PC-3 (cell line): ENCODE measurements at regions of chr17 and their contacts with region 1.

Region 1: DNA sequence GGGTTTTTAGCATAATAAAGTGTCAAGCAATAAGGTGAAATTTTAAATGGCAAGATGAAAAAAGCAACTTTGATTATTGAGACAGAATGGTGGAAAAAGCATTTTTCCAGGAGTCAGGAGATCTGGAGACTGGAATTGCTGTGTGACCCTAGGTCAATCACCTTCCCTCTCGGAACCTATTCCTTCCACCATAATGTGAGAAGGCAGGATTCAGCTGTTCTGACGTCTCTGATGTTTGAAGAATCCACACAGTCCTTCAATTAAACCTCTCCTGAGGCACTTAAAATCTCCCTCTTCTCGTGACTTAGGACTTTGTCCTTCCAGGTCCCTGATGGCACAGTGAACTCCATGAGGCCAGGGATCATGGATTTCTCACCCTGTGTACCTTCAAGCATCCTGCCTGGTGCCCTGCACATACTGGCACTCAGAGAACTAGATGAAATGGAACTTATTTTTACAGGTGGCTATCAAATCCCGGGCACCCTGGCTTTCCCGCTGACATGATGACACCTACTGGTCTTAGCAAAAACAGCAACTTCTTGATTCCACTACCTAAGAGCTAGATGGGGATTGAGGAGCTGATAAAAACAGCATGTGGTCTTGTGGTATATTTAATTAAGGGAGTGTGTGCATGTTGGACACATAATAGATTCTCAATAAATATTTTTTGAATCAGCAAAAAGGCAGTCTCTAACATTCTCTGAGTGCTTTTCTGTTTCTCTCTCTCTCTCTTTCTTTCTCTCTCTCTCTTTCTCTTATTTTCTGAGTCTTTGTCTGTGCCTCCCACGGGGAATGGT is 2.3 kb upstream of the CCDC182 start:
- DNase-seq: peak; percentile 83
- ATAC-seq: peak; percentile 95
- H3K4me3 ChIP-seq: no peak overlapping the region
- H3K27ac ChIP-seq: no peak overlapping the region
- H3K4me1 ChIP-seq: no peaks in the 10 kb centered on the region
- H3K27me3 ChIP-seq: peaks cover 40% of the 10 kb centered on the region
- CTCF ChIP-seq: peak; percentile 96

Region 2: DNA sequence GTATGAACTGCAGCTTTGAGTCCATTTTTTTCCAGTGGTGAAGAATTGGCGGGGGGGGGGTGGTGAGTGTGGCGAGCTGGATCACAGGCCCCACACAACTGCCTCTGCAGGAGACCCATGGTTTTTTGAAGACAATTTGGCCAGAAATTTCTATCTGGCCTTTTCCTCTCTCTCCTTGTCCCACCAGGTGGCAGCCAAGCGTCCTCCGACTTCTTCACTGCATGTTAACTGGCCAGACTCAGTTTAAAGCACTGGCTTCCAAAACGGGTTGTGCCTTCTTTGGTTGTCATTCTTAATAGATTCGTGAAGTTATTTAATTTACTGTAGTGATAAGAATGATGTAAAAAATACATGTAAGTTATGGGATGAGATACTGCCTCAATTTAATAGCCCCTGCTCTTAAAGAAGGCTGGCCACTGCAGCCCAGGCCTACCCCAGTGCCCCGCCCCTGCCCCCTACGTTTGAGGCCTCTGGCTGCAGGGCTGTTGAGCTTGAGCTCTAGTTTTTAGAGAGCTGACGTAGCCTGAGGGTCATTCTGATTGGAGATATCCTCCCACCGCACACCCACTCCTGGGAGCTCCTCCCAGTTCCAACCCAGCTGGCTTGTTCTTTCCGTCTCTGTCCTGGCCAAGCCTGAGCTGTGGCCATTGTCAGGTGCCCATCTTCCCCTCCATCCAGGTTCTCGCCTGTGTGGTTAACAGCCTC is 625.9 kb before region 1 on chr17:
- CTCF ChIA-PET with region 1: no interaction called
- POLR2A ChIA-PET with region 1: interaction called, 13 read pairs
- intact Hi-C with region 1: no loop called
- DNase-seq: peak; percentile 63
- ATAC-seq: peak; percentile 73
- H3K4me3 ChIP-seq: no peak overlapping the region
- H3K27ac ChIP-seq: no peak overlapping the region
- H3K4me1 ChIP-seq: no peaks in the 10 kb centered on the region
- H3K27me3 ChIP-seq: no peaks in the 10 kb centered on the region
- CTCF ChIP-seq: peak; percentile 77

Region 3: GRCh38 chr17:57138976-57139554 is 608.4 kb before region 1 on chr17:
- CTCF ChIA-PET with region 1: interaction called, 16 read pairs
- POLR2A ChIA-PET with region 1: no interaction called
- intact Hi-C with region 1: no loop called
- DNase-seq: peak; percentile 54
- ATAC-seq: peak; percentile 77
- H3K4me3 ChIP-seq: no peak overlapping the region
- H3K27ac ChIP-seq: no peak overlapping the region
- H3K4me1 ChIP-seq: no peaks in the 10 kb centered on the region
- H3K27me3 ChIP-seq: no peaks in the 10 kb centered on the region
- CTCF ChIP-seq: peak; percentile 34; the same call in 1 of the 2 replicates

Region 4: DNA sequence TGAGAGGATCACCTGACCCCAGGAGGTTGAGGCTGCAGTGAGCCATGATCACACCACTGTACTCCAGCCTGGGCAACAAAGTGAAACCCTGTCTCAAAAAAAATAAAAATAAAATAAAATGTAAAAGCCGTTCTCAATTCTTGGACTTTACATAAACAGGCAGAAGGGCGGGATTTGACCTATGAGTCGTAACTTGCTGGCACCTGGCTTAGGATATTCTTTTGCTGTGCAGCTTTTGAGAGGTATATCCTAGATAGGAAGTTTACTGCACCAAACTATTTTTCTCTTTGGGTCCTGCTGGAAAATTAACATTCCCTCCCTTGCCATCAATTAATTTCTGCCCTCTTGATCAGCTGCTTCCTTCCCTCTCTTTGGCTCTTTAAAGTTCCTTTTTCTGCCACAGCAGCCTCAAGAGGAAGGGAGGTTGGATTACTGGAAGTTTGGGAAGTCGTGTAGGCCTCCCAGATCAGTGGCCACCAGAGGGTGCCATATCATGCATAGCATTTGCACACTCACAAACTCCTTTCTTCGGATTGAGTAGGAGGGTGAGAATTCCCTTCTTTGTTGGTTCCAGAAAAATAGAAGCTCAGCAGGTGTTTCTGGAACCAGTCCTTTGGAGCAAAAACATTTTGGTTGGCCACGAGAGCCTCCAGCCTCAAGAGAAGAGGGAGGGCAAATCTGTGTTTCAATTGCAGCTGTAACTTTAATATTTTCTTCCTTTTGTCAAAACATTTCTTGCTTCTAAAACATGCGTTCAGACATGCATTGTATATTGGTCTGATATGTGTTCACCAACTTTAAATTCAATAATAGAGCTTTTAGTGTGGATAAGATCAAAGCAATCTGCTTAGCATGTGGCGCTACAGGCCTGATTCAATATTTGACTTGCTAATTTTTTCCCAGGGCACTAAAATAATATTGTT is 149.6 kb before region 1 on chr17:
- CTCF ChIA-PET with region 1: interaction called, 11 read pairs
- POLR2A ChIA-PET with region 1: no interaction called
- intact Hi-C with region 1: loop called (anchors 1 kb)
- DNase-seq: peak; percentile 85
- ATAC-seq: peak; percentile 90
- H3K4me3 ChIP-seq: no peak overlapping the region
- H3K27ac ChIP-seq: peak overlapping the region; percentile 38; the same call in 1 of the 2 replicates
- H3K4me1 ChIP-seq: peaks cover 6% of the 10 kb centered on the region
- H3K27me3 ChIP-seq: no peaks in the 10 kb centered on the region
- CTCF ChIP-seq: peak; percentile 98

Region 5: DNA sequence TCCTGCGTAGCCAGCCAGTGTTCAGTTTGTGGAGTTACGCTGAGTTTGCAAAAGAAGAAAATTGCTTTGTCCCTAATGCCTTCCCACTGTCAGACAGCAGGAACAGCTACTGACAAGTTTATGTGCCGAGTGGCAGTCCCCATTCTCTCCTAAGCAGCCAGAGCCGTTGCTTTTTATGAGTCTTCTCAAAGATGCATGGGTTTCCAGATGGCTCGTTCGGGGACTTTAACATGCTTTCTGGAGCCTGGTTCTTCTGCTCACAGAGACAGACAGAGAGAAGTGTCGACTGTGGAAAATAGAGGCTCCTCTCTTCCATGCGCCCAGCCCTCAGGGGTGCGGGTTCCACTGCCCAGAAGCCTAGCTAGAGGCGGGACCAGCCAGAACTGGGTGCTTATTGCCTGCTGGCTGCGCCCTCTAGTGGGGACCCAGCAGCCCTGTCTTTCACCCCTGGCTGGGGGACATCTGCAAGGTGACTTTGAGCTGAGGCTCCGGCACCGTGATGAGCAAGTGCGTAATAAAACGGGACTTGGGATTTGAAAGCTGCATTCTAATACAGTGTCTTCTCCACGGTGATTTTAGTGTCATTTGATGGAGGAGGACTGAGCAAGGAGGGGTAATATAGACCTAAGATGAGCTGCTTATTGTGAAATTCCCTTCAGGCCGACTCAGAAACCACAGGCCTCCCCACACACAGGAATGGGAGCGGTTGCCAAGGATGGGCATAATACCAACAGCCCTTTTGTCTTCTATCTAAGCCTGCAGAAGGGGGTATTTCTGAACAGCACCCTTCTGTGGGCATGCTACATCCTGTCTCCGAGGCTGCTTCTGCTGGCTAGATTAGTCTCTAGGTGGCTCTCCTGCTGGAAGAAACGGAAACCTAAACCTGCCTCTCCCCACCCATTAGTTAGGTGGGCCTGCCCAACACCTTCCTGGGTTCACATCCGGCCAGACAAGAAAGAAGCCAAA is 75.5 kb before region 1 on chr17:
- CTCF ChIA-PET with region 1: interaction called, 10 read pairs
- POLR2A ChIA-PET with region 1: no interaction called
- intact Hi-C with region 1: loop called (anchors 1 kb)
- DNase-seq: peak; percentile 81
- ATAC-seq: peak; percentile 99
- H3K4me3 ChIP-seq: no peak overlapping the region
- H3K27ac ChIP-seq: no peak overlapping the region
- H3K4me1 ChIP-seq: peaks cover 4% of the 10 kb centered on the region; the same call in 1 of the 2 replicates
- H3K27me3 ChIP-seq: no peaks in the 10 kb centered on the region
- CTCF ChIP-seq: peak; percentile 100

Region 6: GRCh38 chr17:57783106-57783742 is 35.8 kb after region 1 on chr17:
- CTCF ChIA-PET with region 1: interaction called, 10 read pairs
- POLR2A ChIA-PET with region 1: no interaction called
- intact Hi-C with region 1: no loop called
- DNase-seq: peak; percentile 79
- ATAC-seq: peak; percentile 90
- H3K4me3 ChIP-seq: no peak overlapping the region
- H3K27ac ChIP-seq: no peak overlapping the region
- H3K4me1 ChIP-seq: no peaks in the 10 kb centered on the region
- H3K27me3 ChIP-seq: peaks cover 45% of the 10 kb centered on the region
- CTCF ChIP-seq: peak; percentile 98

Region 7: GRCh38 chr17:57833179-57833939 is 85.9 kb after region 1 on chr17:
- CTCF ChIA-PET with region 1: interaction called, 6 read pairs
- POLR2A ChIA-PET with region 1: no interaction called
- intact Hi-C with region 1: loop called (anchors 5 kb)
- DNase-seq: peak; percentile 80
- ATAC-seq: peak; percentile 32
- H3K4me3 ChIP-seq: no peak overlapping the region; the same call in 1 of the 2 replicates
- H3K27ac ChIP-seq: no peak overlapping the region
- H3K4me1 ChIP-seq: peaks cover 27% of the 10 kb centered on the region
- H3K27me3 ChIP-seq: no peaks in the 10 kb centered on the region
- CTCF ChIP-seq: peak; percentile 99

Region 8: GRCh38 chr17:57927048-57927723 is 179.8 kb after region 1 on chr17:
- CTCF ChIA-PET with region 1: no interaction called
- POLR2A ChIA-PET with region 1: no interaction called
- intact Hi-C with region 1: no loop called
- DNase-seq: peak; percentile 85
- ATAC-seq: peak; percentile 96
- H3K4me3 ChIP-seq: no peak overlapping the region
- H3K27ac ChIP-seq: peak overlapping the region; percentile 68
- H3K4me1 ChIP-seq: peaks cover 32% of the 10 kb centered on the region
- H3K27me3 ChIP-seq: no peaks in the 10 kb centered on the region
- CTCF ChIP-seq: no peak